ENCODE measurements at regions of chr5 and their contacts with region 1.

Region 1: GRCh38 chr5:56838409-56839039 is 23.2 kb downstream of the MAP3K1 start:
- DNase-seq: peak in 4 of 5 donors; percentile 64 to 69 (median 64)
- H3K4me3 ChIP-seq: peak overlapping the region in 1 of 2 donors; percentile 9
- H3K4me3 Mint-ChIP-seq: peak overlapping the region in 7 of 8 donors; percentile 43 to 88 (median 70)
- H3K27ac ChIP-seq: peak overlapping the region; percentile 45
- H3K27ac Mint-ChIP-seq: peak overlapping the region; percentile 67 to 92 (median 92)
- H3K4me1 ChIP-seq: peaks cover 99% of the 10 kb centered on the region
- H3K4me1 Mint-ChIP-seq: peaks cover 77 to 95% (median 87%) of the 10 kb centered on the region in 4 donors
- H3K27me3 ChIP-seq: no peaks in the 10 kb centered on the region
- H3K27me3 Mint-ChIP-seq: no peaks in the 10 kb centered on the region

Region 2: DNA sequence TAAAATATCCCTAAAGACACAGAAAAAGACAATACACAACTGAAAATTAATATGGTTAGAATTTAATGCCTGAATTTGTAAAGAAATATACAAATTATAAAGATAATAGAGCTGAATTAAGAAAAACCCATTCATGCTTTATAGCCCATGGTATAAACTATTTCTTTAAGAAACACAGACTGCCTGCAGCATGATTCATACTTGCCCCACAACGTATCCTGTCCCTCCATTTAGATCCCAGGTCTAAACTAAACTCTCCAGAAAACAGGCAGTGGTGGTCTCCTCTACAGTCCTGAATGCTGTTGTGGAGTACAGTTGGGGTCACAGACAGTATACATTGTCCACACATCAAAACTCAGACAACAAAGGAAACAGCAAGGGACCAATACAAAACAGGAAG is 868.6 kb before region 1 on chr5:
- CTCF ChIA-PET with region 1: no interaction called
- POLR2A ChIA-PET with region 1: no interaction called
- intact Hi-C with region 1: loop called (anchors 10 kb)
- DNase-seq: no peak
- H3K4me3 ChIP-seq: no peak overlapping the region
- H3K4me3 Mint-ChIP-seq: peak overlapping the region in 4 of 8 donors; percentile 8 to 62 (median 24)
- H3K27ac ChIP-seq: no peak overlapping the region
- H3K27ac Mint-ChIP-seq: peak overlapping the region in 5 of 7 donors; percentile 5 to 90 (median 37)
- H3K4me1 ChIP-seq: peaks cover 35% of the 10 kb centered on the region
- H3K4me1 Mint-ChIP-seq: peaks cover 30 to 57% (median 36%) of the 10 kb centered on the region in 4 donors
- H3K27me3 ChIP-seq: no peaks in the 10 kb centered on the region
- H3K27me3 Mint-ChIP-seq: no peaks in the 10 kb centered on the region

Region 3: DNA sequence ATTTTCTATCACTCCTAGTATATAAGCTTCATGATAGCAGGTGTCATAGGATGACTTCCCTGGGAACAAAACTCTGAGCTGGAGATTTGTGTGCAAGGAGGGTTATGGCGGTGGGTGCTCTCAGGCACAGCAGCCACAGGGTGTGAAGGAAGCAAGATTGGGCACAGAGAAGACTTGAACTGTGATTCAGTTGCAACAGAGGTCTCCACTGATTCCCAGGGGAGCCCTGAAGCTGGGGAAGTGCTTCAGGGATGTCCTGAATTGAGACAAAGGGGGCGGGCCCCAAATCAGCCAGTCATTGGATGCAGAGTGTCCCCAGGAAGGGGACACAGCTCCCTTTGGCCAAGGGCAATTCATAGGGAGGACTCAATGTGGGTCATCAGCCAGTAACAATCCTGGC is 561.0 kb before region 1 on chr5:
- CTCF ChIA-PET with region 1: interaction called, 190 read pairs
- POLR2A ChIA-PET with region 1: interaction called, 38 read pairs
- intact Hi-C with region 1: no loop called
- DNase-seq: no peak
- H3K4me3 ChIP-seq: no peak overlapping the region
- H3K4me3 Mint-ChIP-seq: no peak overlapping the region
- H3K27ac ChIP-seq: no peak overlapping the region
- H3K27ac Mint-ChIP-seq: no peak overlapping the region
- H3K4me1 ChIP-seq: no peaks in the 10 kb centered on the region
- H3K4me1 Mint-ChIP-seq: no peaks in the 10 kb centered on the region
- H3K27me3 ChIP-seq: no peaks in the 10 kb centered on the region
- H3K27me3 Mint-ChIP-seq: no peaks in the 10 kb centered on the region

Region 4: DNA sequence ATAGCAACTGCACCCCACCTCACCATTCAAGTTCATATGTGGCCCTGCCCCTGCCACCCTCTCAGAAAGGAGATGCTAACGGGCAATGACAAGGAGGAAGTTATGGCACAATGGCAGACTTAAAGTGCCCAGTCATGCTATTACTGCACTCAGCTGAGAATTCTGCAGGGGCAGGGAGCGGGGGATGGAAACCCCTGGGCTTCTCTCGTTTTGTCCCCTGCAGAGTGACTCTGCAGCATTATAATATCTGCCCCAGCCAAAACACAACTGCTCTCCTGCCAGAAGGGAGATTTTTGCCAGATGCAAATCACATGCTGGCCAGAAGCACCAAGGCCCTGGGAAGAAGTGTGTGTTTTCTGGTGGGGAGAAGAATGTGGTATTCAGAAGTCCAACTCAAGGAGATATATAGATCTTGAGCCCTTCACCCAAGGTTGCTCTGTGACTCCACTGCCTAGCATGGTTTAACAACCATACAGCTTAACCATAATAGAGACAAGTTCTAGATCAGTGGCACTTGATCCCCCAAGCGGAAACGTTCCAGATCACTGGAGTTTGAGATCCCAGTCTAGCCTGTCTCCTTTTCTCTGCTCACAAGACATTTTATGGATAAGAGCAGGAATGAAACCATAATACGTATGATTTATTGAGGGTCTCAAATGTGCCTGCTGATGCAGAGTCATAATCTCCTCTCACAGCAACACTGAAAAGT is 230.2 kb before region 1 on chr5:
- CTCF ChIA-PET with region 1: no interaction called
- POLR2A ChIA-PET with region 1: no interaction called
- intact Hi-C with region 1: loop called (anchors 5 kb)
- DNase-seq: no peak
- H3K4me3 ChIP-seq: no peak overlapping the region
- H3K4me3 Mint-ChIP-seq: no peak overlapping the region
- H3K27ac ChIP-seq: no peak overlapping the region
- H3K27ac Mint-ChIP-seq: peak overlapping the region in 3 of 7 donors; percentile 29 to 67 (median 53)
- H3K4me1 ChIP-seq: peaks cover 61% of the 10 kb centered on the region
- H3K4me1 Mint-ChIP-seq: peaks cover 45 to 84% (median 68%) of the 10 kb centered on the region in 4 donors
- H3K27me3 ChIP-seq: no peaks in the 10 kb centered on the region
- H3K27me3 Mint-ChIP-seq: no peaks in the 10 kb centered on the region

Region 5: DNA sequence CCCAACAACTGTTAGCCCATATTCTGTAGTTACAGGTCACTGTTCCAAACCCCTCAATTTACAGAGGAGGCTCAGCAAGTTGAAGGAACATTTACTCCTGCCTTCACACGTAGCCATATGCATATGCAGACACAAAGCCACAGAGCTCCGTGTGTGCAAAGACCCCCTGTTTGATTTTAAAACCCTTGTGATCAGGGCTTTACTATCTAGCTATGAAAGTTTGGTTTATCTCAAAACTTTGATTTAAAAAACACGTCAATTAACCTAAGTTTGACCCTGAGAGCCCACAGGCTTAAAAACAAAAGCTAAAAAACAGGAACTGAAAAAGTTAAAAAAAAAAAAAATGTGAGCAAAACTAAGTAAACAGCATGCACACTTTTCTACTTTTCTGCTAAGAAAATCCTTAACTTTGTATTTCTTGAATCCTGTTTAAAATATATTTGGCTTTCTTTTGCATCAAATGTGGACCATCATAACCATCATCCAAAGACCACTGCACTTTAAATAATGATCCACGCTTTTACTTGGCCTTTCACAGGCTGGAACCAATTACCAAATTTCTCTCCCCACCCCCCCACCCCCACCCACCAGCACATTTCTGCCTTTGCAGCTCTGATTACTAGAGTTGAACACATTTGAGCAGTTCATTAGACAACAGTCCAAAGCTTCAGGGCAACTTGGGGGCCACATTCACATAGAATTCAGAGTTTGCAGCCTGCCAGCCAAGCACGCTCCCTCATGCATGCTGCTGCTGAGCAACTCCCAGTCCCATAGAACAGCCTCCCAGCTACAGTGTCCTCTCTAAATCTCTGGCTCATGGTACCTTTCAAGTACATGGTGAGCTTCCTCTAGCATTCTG is 152.0 kb before region 1 on chr5:
- CTCF ChIA-PET with region 1: interaction called, 12 read pairs
- POLR2A ChIA-PET with region 1: interaction called, 9 read pairs
- intact Hi-C with region 1: no loop called
- DNase-seq: peak in 4 of 5 donors; percentile 33 to 48 (median 41)
- H3K4me3 ChIP-seq: peak overlapping the region in 1 of 2 donors; percentile 15
- H3K4me3 Mint-ChIP-seq: peak overlapping the region in 7 of 8 donors; percentile 29 to 72 (median 52)
- H3K27ac ChIP-seq: peak overlapping the region; percentile 31
- H3K27ac Mint-ChIP-seq: peak overlapping the region; percentile 44 to 91 (median 84)
- H3K4me1 ChIP-seq: peaks cover 99% of the 10 kb centered on the region
- H3K4me1 Mint-ChIP-seq: peaks cover 60 to 100% (median 80%) of the 10 kb centered on the region in 4 donors
- H3K27me3 ChIP-seq: no peaks in the 10 kb centered on the region
- H3K27me3 Mint-ChIP-seq: no peaks in the 10 kb centered on the region

Region 6: GRCh38 chr5:56852228-56853000 is 13.9 kb after region 1 on chr5:
- CTCF ChIA-PET with region 1: interaction called, 15 read pairs
- POLR2A ChIA-PET with region 1: interaction called, 5 read pairs
- intact Hi-C with region 1: no loop called
- DNase-seq: peak in 3 of 5 donors; percentile 20 to 35 (median 24)
- H3K4me3 ChIP-seq: no peak overlapping the region
- H3K4me3 Mint-ChIP-seq: peak overlapping the region; percentile 67 to 88 (median 74)
- H3K27ac ChIP-seq: peak overlapping the region; percentile 34
- H3K27ac Mint-ChIP-seq: peak overlapping the region in 6 of 7 donors; percentile 43 to 83 (median 74)
- H3K4me1 ChIP-seq: peaks cover 94% of the 10 kb centered on the region
- H3K4me1 Mint-ChIP-seq: peaks cover 64 to 94% (median 80%) of the 10 kb centered on the region in 4 donors
- H3K27me3 ChIP-seq: no peaks in the 10 kb centered on the region
- H3K27me3 Mint-ChIP-seq: no peaks in the 10 kb centered on the region

Measured in CD4-positive, alpha-beta memory T cell (primary cell).